Gastrocnemius medialis (tissue), 4 donors: ENCODE measurements at regions of chr9 and their contacts with region 1.

Region 1: DNA sequence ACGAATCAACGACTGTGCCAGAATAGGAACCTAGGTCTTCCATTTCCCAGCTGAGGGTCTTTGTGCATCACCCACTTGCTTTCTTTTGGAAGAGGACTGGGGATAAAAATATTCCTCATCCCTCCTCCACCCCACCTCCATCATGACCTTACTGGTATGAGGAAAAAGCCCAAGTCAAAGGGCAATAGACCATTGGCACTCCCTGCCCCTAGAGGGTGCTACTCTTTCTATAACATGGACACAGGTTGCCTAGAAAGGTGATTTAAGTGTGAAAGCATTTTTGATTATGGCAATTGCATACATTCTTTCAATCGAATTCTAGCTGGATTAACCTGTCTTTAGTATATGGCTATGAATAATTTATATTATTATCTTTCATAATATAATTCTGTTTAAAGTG is 22.8 kb upstream of the ZNF618 start:
- DNase-seq: no peak
- ATAC-seq: no peak
- H3K4me3 ChIP-seq: no peak overlapping the region
- H3K27ac ChIP-seq: no peak overlapping the region
- H3K4me1 ChIP-seq: no peaks in the 10 kb centered on the region
- H3K27me3 ChIP-seq: no peaks in the 10 kb centered on the region
- CTCF ChIP-seq: peak in 3 of 5 experiments; percentile 34 to 53 (median 38)
- POLR2A ChIP-seq: no peak

Region 2: GRCh38 chr9:113837334-113837733 is 16.0 kb before region 1 on chr9:
- in situ Hi-C with region 1: no loop called
- intact Hi-C with region 1: no loop called
- DNase-seq: no peak
- ATAC-seq: no peak
- H3K4me3 ChIP-seq: no peak overlapping the region
- H3K27ac ChIP-seq: no peak overlapping the region
- H3K4me1 ChIP-seq: no peaks in the 10 kb centered on the region
- H3K27me3 ChIP-seq: no peaks in the 10 kb centered on the region
- CTCF ChIP-seq: no peak
- POLR2A ChIP-seq: no peak

Region 3: GRCh38 chr9:113868501-113868900 is 15.2 kb after region 1 on chr9:
- in situ Hi-C with region 1: no loop called
- intact Hi-C with region 1: no loop called
- DNase-seq: no peak
- ATAC-seq: no peak
- H3K4me3 ChIP-seq: no peak overlapping the region
- H3K27ac ChIP-seq: no peak overlapping the region
- H3K4me1 ChIP-seq: no peaks in the 10 kb centered on the region
- H3K27me3 ChIP-seq: no peaks in the 10 kb centered on the region
- CTCF ChIP-seq: no peak
- POLR2A ChIP-seq: no peak

Region 4: GRCh38 chr9:113963017-113963620 is 109.8 kb after region 1 on chr9:
- in situ Hi-C with region 1: no loop called
- intact Hi-C with region 1: loop called (anchors 2 kb)
- DNase-seq: peak in 1 of 2 donors; percentile 32
- ATAC-seq: peak; percentile 49 to 56
- H3K4me3 ChIP-seq: no peak overlapping the region
- H3K27ac ChIP-seq: no peak overlapping the region
- H3K4me1 ChIP-seq: peaks cover 0 to 10% of the 10 kb centered on the region in 2 donors
- H3K27me3 ChIP-seq: no peaks in the 10 kb centered on the region
- CTCF ChIP-seq: peak; percentile 54 to 79 (median 64)
- POLR2A ChIP-seq: no peak